Left colon (tissue), 2 donors: ENCODE measurements at regions of chr1 and their contacts with region 1.

Region 1: DNA sequence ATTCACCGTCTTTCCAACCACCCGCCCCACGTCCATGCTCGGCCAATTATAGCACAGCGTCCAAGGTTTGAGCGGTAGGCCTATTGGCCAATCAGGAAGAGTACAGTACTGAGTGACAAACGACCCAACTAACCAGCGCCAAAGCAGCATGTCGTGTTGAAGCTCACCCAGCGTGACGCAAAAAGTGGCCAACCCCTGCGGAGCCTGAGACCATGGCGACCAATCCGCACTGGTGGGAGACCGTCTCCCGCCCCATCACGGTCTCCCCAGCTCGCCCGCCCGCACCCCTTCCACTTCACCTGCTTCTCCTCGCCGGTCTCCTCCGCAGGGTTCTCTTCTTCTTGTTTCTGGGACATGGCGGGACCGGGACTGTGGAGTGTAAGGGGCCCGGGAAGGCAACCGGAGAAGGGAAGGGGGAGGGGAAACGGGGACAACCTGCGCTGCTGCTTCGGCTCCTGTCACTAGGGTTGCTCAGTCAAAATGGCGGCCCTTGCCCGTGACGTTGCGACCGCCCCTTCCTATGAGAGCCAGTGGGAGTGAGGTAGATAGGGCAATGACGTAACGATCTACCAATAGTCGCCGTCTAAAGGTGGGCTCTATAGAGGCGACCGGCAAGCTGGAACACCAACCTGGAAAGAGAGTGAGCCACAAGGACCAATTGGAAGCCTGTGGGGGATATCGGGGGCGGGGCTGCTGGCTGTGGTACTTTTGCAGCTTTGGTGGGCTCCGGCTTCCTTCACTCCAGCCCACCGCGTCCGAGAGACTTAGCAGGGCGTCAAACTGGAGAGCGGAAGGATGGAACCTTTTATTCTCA is at the start of gene ENSA:
- DNase-seq: peak; percentile 95 to 99
- ATAC-seq: peak; percentile 89
- total RNA-seq, gene ENSA: 175 to 222 TPM

Region 2: DNA sequence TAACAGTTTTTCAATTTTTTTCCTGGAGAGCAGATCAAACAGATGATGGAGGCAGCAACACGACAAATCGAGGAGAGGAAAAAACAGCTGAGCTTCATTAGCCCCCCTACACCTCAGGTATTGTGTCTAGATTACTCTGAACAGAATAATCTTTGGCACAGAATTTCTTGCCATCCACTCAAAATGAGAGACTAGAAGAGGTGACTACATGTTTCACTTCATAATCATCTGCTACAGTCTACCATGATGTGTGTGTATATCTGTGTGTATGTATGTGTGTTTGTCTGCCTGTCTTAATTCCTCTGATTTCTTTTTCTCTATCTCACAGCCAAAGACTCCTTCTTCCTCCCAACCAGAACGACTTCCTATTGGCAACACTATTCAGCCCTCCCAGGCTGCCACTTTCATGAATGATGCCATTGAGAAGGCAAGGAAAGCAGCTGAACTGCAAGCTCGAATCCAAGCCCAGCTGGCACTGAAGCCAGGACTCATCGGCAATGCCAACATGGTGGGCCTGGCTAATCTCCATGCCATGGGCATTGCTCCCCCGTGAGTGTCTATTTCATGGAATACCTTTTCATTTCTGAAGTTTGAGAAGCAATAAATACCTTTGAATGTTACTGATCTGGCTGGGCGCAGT is 296.6 kb before region 1 on chr1:
- intact Hi-C with region 1: no loop called
- DNase-seq: no peak
- ATAC-seq: no peak

Region 3: GRCh38 chr1:150552093-150552691 is 77.1 kb before region 1 on chr1:
- intact Hi-C with region 1: loop called in 1 of 2 experiments (anchors 10 kb)
- DNase-seq: peak in 1 of 2 donors; percentile 80
- ATAC-seq: peak; percentile 15